Astrocyte of the spinal cord (primary cell): ENCODE measurements at regions of chr1 and their contacts with region 1.

Region 1: GRCh38 chr1:181206513-181206912 is 118.0 kb downstream of the IER5 start:
- DNase-seq: no peak
- H3K4me3 ChIP-seq: no peak overlapping the region
- CTCF ChIP-seq: no peak

Region 2: DNA sequence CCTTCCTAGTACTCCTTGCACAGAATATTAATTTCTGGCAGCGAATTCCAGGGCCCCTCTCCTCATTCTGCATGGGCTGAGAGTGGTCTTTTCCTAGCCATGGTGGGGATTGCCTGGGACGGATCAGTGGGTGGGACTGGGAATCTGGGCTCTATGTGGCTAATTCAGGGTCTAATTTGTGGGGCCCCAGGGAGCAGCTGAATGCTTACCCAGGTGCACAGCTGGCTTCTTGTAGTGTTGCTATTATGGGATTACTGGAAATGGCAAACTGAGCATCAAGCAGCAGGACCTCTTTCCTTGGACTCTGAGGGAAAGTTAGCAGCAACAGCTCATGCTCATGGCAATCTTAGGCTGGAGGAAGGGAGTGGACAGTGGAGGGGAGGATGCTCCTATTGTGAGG is 89.7 kb after region 1 on chr1:
- in situ Hi-C with region 1: no loop called
- DNase-seq: no peak
- H3K4me3 ChIP-seq: no peak overlapping the region
- CTCF ChIP-seq: no peak

Region 3: DNA sequence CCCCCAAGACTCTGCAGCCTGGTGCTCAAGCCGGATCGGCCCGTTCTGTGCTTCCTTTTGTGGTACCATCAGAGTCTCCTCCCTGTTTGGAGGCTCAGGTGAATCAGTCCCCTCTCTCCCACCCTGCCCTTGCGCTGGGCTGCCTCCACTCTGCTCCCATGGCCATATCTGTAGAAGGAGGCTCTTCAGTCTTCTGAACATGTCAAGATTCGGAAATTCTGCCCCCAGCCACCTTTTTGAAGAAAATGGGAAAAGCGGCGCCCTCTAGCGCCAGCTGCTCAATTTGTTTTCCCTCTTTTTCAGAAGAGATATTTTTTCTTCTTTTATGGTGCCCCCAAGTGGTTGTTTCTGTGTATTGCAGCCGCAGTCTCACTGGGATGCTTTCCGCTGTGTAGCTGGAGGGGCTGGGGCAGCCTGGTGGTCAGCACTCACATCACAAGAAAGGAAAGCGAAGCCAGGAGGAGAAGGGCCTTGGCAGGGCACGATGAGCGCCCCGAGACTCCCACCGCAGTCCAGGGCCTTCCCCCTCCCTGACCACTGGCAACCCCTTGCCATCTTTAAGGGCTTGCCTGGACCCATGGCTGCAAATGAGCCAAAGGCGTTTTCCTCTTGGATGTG is 218.4 kb after region 1 on chr1:
- in situ Hi-C with region 1: loop called (anchors 25 kb)
- DNase-seq: peak; percentile 74
- H3K4me3 ChIP-seq: no peak overlapping the region
- CTCF ChIP-seq: peak; percentile 93